Astrocyte of the cerebellum (primary cell): ENCODE measurements at regions of chr12 and their contacts with region 1.

Region 1: GRCh38 chr12:121060149-121061001 is 21.3 kb upstream of the OASL start:
- DNase-seq: no peak
- H3K4me3 ChIP-seq: no peak overlapping the region
- CTCF ChIP-seq: peak; percentile 66

Region 2: GRCh38 chr12:121145221-121145620 is 84.8 kb after region 1 on chr12:
- in situ Hi-C with region 1: loop called (anchors 5 kb)
- DNase-seq: no peak
- H3K4me3 ChIP-seq: no peak overlapping the region
- CTCF ChIP-seq: no peak